PC-3 (cell line): ENCODE measurements at regions of chr2 and their contacts with region 1.

Region 1: DNA sequence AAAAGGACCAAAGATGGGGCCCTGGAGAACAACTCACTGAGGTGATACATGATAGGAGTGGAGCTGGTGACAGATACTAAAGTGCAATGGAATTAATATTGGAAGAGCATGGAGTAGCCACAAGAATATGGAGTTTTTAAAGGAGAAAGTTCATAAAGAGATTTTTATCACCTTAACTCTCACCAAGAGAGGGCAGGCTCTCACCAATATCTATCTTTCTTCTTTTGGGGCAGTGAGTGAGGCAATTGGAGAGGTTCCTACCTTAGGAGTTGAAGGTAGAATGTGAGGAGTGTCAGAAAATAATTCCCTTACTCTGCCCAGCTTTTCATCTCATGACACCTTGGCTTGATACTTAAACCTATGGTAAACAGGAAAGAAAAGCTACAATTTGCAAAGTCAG is 233.7 kb upstream of the CWC22 start:
- DNase-seq: peak; percentile 65
- ATAC-seq: peak; percentile 59; the same call in 1 of the 2 replicates
- H3K4me3 ChIP-seq: no peak overlapping the region
- H3K27ac ChIP-seq: no peak overlapping the region
- H3K4me1 ChIP-seq: no peaks in the 10 kb centered on the region
- H3K27me3 ChIP-seq: no peaks in the 10 kb centered on the region
- CTCF ChIP-seq: peak; percentile 71

Region 2: DNA sequence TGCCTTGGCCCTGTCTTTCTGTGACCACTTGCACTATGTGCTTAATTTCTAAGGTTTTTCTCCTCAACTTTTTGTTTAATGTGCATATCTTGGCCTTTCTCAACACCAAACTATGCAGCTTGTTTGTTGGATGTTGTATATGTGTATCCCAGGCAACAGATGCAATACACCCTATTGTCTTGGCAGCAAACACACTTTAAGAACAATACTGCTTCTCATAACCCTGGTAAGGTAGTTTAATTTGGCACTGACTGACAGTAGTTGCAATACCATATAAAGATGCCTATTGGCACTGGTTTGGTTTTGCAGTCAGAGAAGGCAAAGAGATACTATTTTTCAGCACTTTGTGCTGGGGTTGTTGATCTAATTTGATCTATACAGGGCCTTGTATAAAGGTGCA is 127.0 kb after region 1 on chr2:
- CTCF ChIA-PET with region 1: no interaction called
- POLR2A ChIA-PET with region 1: no interaction called
- intact Hi-C with region 1: loop called (anchors 5 kb)
- DNase-seq: peak; percentile 68
- ATAC-seq: peak; percentile 93
- H3K4me3 ChIP-seq: no peak overlapping the region
- H3K27ac ChIP-seq: peak overlapping the region; percentile 71
- H3K4me1 ChIP-seq: peaks cover 25% of the 10 kb centered on the region
- H3K27me3 ChIP-seq: no peaks in the 10 kb centered on the region
- CTCF ChIP-seq: no peak

Region 3: GRCh38 chr2:180753809-180754761 is 513.3 kb after region 1 on chr2:
- CTCF ChIA-PET with region 1: no interaction called
- POLR2A ChIA-PET with region 1: no interaction called
- intact Hi-C with region 1: loop called (anchors 10 kb)
- DNase-seq: peak; percentile 71
- ATAC-seq: peak; percentile 100
- H3K4me3 ChIP-seq: no peak overlapping the region
- H3K27ac ChIP-seq: peak overlapping the region; percentile 79
- H3K4me1 ChIP-seq: peaks cover 25% of the 10 kb centered on the region
- H3K27me3 ChIP-seq: no peaks in the 10 kb centered on the region
- CTCF ChIP-seq: no peak

Region 4: GRCh38 chr2:181058378-181059269 is 817.9 kb after region 1 on chr2:
- CTCF ChIA-PET with region 1: interaction called, 4 read pairs
- POLR2A ChIA-PET with region 1: no interaction called
- intact Hi-C with region 1: loop called (anchors 10 kb)
- DNase-seq: peak; percentile 72
- ATAC-seq: 0 out of 2 replicates have a peak, but pooled peaks have one; percentile 25
- H3K4me3 ChIP-seq: no peak overlapping the region
- H3K27ac ChIP-seq: no peak overlapping the region
- H3K4me1 ChIP-seq: peaks cover 7% of the 10 kb centered on the region; the same call in 1 of the 2 replicates
- H3K27me3 ChIP-seq: no peaks in the 10 kb centered on the region
- CTCF ChIP-seq: peak; percentile 93